Endothelial cell of umbilical vein (primary cell): ENCODE measurements at regions of chr20 and their contacts with region 1.

Region 1: DNA sequence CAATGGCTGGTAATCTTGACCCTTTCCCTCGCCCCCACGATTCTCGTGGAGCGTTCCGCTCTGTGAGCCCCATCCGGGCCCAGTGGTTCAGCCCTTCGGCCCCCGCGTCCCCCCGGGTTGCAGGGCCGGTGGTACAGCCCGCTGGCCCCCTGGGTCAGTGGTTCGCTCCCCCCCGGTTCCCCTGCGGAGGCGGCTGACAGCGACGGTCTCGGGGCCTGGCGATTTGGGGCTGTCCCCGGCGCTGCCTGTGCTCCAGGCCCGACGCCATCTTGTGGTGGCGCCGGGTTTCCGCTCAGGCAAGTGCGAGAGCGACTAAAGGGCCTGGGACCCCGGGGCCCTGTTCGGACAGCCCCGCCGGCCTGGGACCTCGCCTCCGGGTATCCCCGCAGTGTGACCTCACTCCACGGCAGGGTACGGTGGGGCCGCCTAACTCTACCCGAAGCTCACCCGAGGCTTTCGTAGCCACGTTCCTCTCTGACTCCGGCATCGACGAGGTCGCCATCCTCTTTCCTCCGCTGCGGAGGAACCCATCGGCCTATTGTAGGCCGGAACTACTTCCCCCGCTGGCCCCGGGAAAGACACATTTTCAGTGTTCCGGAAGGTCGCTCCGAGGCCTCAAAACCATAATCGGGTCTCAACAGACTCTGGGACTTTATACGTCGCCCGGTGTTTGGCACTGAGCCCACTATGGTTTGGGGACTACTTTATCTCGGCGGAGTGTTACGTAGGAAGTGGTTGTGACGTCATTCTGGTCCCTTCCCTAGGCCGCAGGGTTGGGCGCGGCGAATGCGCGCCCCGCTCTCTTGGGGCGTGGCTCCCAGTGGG is at the start of gene ZNF335:
- DNase-seq: peak; percentile 95
- H3K4me3 ChIP-seq: peak within 1 kb of the TSS; percentile 57 to 79 (median 72)
- H3K27ac ChIP-seq: peak within 1 kb of the TSS; percentile 100
- H3K4me1 ChIP-seq: peaks cover 14% of the 10 kb centered on the region
- H3K27me3 ChIP-seq: peaks cover 2 to 3% of the 10 kb centered on the region in 2 experiments
- CTCF ChIP-seq: peak in 1 of 2 donors; percentile 17
- POLR2A ChIP-seq: no peak
- total RNA-seq, gene ZNF335: 22.8 and 23.9 TPM in 2 replicates

Region 2: GRCh38 chr20:45823949-45824835 is 147.7 kb before region 1 on chr20:
- CTCF ChIA-PET with region 1: interaction called, 11 read pairs
- POLR2A ChIA-PET with region 1: interaction called, 3 read pairs
- dilution Hi-C with region 1: no loop called
- intact Hi-C with region 1: loop called (anchors 2 kb)
- DNase-seq: peak; percentile 46
- H3K4me3 ChIP-seq: peak overlapping the region in 1 of 3 experiments; percentile 17
- H3K27ac ChIP-seq: no peak overlapping the region
- H3K4me1 ChIP-seq: peaks cover 4% of the 10 kb centered on the region
- H3K27me3 ChIP-seq: peaks cover 11 to 16% of the 10 kb centered on the region in 2 experiments
- CTCF ChIP-seq: peak; percentile 40 to 75
- POLR2A ChIP-seq: no peak

Region 3: GRCh38 chr20:45890985-45891983 is 80.6 kb before region 1 on chr20 and contains the starts of genes CTSA and NEURL2:
- CTCF ChIA-PET with region 1: interaction called, 35 read pairs
- POLR2A ChIA-PET with region 1: no interaction called
- dilution Hi-C with region 1: no loop called
- intact Hi-C with region 1: loop called (anchors 2 kb)
- DNase-seq: peak; percentile 88
- H3K4me3 ChIP-seq: peak within 1 kb of the TSS; percentile 47 to 81 (median 57)
- H3K27ac ChIP-seq: peak within 1 kb of the TSS; percentile 50
- H3K4me1 ChIP-seq: peaks cover 22% of the 10 kb centered on the region
- H3K27me3 ChIP-seq: no peaks in the 10 kb centered on the region
- CTCF ChIP-seq: no peak
- POLR2A ChIP-seq: peak; percentile 74
- total RNA-seq, gene CTSA: 156 and 169 TPM in 2 replicates
- total RNA-seq, gene NEURL2: 5.4 and 6.5 TPM in 2 replicates

Region 4: DNA sequence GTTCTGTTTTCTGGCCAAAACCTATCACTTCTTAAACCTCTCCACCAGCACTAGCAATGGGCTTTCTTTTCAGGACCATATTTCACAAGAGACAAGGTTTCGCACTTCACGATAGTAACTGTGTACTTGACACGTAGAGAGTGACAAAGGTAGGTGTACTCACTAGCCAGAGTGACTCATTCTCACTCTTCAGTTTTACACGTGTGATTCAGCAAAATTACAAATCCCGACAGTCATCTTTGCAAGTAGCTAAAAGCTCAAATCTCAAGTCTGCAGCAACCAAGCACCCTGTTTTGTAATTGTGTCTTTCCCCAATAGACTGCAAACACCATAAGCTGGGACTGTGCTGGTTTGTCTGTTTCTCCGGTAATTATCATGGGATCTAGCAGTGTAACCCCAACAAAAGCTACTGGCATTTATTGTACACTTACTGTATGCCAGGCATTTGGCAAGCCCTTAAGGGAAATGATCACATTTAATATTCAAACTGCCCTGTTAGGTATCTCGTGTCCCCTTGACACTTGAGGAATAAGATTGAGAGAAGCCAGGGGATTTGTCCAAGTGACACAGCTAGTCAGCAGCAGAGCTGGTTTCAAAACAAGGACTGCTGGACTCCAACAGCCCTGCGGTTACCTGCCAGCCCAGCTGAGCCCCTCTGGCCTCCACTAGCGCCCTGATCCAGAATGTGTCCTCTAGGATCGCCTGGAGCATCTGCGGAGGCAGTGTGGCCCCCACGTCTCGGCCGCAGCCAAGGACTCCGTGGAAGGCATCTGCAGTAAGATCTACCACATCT is 27.5 kb before region 1 on chr20:
- CTCF ChIA-PET with region 1: interaction called, 18 read pairs
- POLR2A ChIA-PET with region 1: no interaction called
- dilution Hi-C with region 1: no loop called
- intact Hi-C with region 1: no loop called
- DNase-seq: no peak
- H3K4me3 ChIP-seq: no peak overlapping the region
- H3K27ac ChIP-seq: no peak overlapping the region
- H3K4me1 ChIP-seq: no peaks in the 10 kb centered on the region
- H3K27me3 ChIP-seq: no peaks in the 10 kb centered on the region
- CTCF ChIP-seq: no peak
- POLR2A ChIP-seq: no peak

Region 5: GRCh38 chr20:46013826-46014516 is 42.1 kb after region 1 on chr20:
- CTCF ChIA-PET with region 1: interaction called, 12 read pairs
- POLR2A ChIA-PET with region 1: no interaction called
- dilution Hi-C with region 1: no loop called
- intact Hi-C with region 1: no loop called
- DNase-seq: peak; percentile 31
- H3K4me3 ChIP-seq: no peak overlapping the region
- H3K27ac ChIP-seq: no peak overlapping the region
- H3K4me1 ChIP-seq: no peaks in the 10 kb centered on the region
- H3K27me3 ChIP-seq: peaks cover 39 to 46% of the 10 kb centered on the region in 2 experiments
- CTCF ChIP-seq: peak; percentile 74 to 85
- POLR2A ChIP-seq: no peak

Region 6: DNA sequence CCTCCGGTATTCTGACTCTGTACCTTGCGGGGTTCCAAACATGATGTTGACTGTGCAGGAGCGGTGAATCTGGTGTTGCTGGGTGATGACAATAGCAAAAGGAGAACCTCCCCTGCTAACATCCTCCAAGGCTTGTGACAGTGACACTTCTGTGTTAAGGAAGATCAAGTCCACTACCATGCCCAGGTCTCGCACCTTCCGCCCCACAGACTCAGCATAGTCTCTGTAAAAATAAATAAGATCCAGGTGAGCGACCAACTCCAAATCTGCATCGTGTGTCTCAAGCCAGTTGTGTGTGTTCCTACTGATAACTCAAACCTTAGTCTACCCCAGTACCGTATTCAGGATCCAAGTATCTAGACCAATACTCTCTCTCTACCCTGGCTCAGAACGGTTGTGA is 93.1 kb after region 1 on chr20:
- CTCF ChIA-PET with region 1: no interaction called
- POLR2A ChIA-PET with region 1: no interaction called
- dilution Hi-C with region 1: no loop called
- intact Hi-C with region 1: no loop called
- DNase-seq: no peak
- H3K4me3 ChIP-seq: no peak overlapping the region
- H3K27ac ChIP-seq: no peak overlapping the region
- H3K4me1 ChIP-seq: peaks cover 15% of the 10 kb centered on the region
- H3K27me3 ChIP-seq: no peaks in the 10 kb centered on the region
- CTCF ChIP-seq: no peak
- POLR2A ChIP-seq: no peak